Naive thymus-derived CD4-positive, alpha-beta T cell (primary cell): ENCODE measurements at regions of chr10 and their contacts with region 1.

Region 1: DNA sequence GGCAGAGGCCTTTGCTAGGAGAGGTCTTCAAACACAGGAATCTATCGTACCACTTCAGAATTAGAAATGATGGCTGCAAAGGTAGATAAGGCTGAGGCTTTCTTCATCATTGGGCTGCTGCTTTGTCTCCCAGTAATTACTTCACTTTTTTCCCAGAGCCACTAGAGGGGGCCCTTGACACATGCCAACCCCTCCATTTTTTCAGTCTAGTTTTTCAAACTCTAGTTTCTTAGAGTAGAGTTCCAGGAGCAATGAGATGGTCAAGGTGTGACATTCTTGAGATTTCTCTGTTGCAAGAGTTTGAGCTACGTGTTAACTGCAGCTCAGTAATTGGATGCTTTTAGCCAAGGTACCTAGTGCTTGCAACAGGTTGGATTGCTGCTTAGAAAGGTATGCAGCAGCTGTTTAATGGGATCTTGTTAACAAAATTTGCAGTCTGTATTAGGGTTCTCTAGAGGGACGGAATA is 33.8 kb upstream of the RBM20 start:
- DNase-seq: peak; percentile 16 to 75 (median 70)
- ATAC-seq: peak; percentile 84
- H3K4me3 ChIP-seq: no peak overlapping the region
- H3K4me3 Mint-ChIP-seq: no peak overlapping the region
- H3K27ac ChIP-seq: no peak overlapping the region
- H3K27ac Mint-ChIP-seq: no peak overlapping the region
- H3K4me1 ChIP-seq: no peaks in the 10 kb centered on the region
- H3K4me1 Mint-ChIP-seq: peaks cover 0 to 18% (median 7%) of the 10 kb centered on the region in 7 donors
- H3K27me3 ChIP-seq: no peaks in the 10 kb centered on the region
- H3K27me3 Mint-ChIP-seq: no peaks in the 10 kb centered on the region

Region 2: GRCh38 chr10:110118891-110119621 is 491.3 kb before region 1 on chr10:
- CTCF ChIA-PET with region 1: no interaction called
- POLR2A ChIA-PET with region 1: no interaction called
- intact Hi-C with region 1: no loop called
- DNase-seq: no peak
- ATAC-seq: no peak
- H3K4me3 ChIP-seq: no peak overlapping the region
- H3K4me3 Mint-ChIP-seq: no peak overlapping the region
- H3K27ac ChIP-seq: no peak overlapping the region
- H3K27ac Mint-ChIP-seq: peak overlapping the region in 3 of 9 donors; percentile 8 to 54 (median 23)
- H3K4me1 ChIP-seq: no peaks in the 10 kb centered on the region
- H3K4me1 Mint-ChIP-seq: peaks cover 0 to 15% (median 7%) of the 10 kb centered on the region in 7 donors
- H3K27me3 ChIP-seq: no peaks in the 10 kb centered on the region
- H3K27me3 Mint-ChIP-seq: no peaks in the 10 kb centered on the region

Region 3: DNA sequence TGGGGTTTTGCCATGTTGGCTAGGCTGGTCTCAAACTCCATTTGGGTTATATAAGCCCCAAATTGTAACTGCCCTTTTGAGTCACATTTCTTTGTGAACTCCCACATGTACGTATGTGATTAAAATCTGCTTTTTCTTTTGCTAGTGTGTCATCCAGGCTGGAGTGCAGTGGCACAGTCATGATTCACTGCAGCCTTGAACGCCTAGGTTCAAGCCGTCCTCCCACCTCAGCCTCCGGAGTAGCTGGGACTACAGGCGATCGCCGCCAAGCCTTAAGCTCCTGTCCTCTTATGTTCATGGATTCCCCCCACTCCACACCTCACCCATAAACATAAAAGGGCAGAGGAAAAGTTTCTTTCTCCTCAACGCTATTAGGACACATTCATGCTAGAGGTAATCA is 47.2 kb before region 1 on chr10:
- CTCF ChIA-PET with region 1: no interaction called
- POLR2A ChIA-PET with region 1: no interaction called
- intact Hi-C with region 1: no loop called
- DNase-seq: no peak
- ATAC-seq: no peak
- H3K4me3 ChIP-seq: no peak overlapping the region
- H3K4me3 Mint-ChIP-seq: no peak overlapping the region
- H3K27ac ChIP-seq: no peak overlapping the region
- H3K27ac Mint-ChIP-seq: no peak overlapping the region
- H3K4me1 ChIP-seq: peaks cover 0 to 4% of the 10 kb centered on the region in 2 donors
- H3K4me1 Mint-ChIP-seq: peaks cover 0 to 8% (median 6%) of the 10 kb centered on the region in 7 donors
- H3K27me3 ChIP-seq: no peaks in the 10 kb centered on the region
- H3K27me3 Mint-ChIP-seq: peaks cover 6 to 56% (median 17%) of the 10 kb centered on the region in 5 donors

Region 4: GRCh38 chr10:110681023-110681681 is 70.8 kb after region 1 on chr10:
- CTCF ChIA-PET with region 1: interaction called, 3 read pairs
- POLR2A ChIA-PET with region 1: no interaction called
- intact Hi-C with region 1: loop called (anchors 1 kb)
- DNase-seq: peak in 3 of 9 donors; percentile 7 to 27 (median 11)
- ATAC-seq: peak; percentile 51
- H3K4me3 ChIP-seq: no peak overlapping the region
- H3K4me3 Mint-ChIP-seq: no peak overlapping the region
- H3K27ac ChIP-seq: no peak overlapping the region
- H3K27ac Mint-ChIP-seq: peak overlapping the region in 2 of 9 donors; percentile 13 to 38
- H3K4me1 ChIP-seq: no peaks in the 10 kb centered on the region
- H3K4me1 Mint-ChIP-seq: peaks cover 0 to 10% (median 3%) of the 10 kb centered on the region in 7 donors
- H3K27me3 ChIP-seq: no peaks in the 10 kb centered on the region
- H3K27me3 Mint-ChIP-seq: peaks cover 0 to 37% (median 12%) of the 10 kb centered on the region in 5 donors

Region 5: DNA sequence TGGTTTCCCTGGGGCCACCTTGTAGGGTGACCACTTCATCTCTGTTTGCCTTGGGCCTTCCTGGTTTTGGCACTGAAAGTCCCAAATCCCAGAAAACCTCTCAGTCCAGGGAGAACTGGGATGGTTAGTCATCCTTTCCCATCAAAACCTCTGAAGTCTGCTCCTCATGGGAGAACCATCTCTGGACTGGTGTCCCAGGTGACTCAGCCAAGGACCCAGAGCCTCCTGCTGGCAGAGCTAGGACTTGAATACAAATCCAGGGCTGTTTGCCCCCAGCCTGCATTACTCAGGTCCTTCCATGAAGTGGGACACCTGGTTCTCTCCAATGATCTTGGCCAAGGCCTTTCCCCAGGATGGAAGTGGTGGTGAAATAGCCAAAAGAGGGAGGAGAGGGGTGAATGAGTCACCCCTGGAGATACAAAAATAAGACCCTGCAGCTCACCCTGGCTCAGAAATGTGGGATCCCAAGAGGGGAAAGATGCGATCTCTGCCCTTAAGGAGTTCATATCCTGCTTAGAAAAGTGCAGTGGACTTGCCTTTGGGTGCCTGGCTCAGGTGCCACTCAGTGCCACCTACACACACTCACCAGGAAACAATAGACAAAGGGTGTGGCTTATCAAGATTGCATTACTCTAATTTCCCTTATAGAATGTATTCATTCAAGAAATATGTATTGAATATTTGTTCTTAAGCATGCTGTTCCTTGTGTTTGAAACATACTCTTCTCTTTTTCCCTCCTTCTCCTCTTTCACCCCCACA is 488.5 kb after region 1 on chr10:
- CTCF ChIA-PET with region 1: no interaction called
- POLR2A ChIA-PET with region 1: no interaction called
- intact Hi-C with region 1: loop called in 1 of 2 experiments (anchors 1 kb)
- DNase-seq: no peak
- ATAC-seq: no peak
- H3K4me3 ChIP-seq: no peak overlapping the region
- H3K4me3 Mint-ChIP-seq: no peak overlapping the region
- H3K27ac ChIP-seq: no peak overlapping the region
- H3K27ac Mint-ChIP-seq: no peak overlapping the region
- H3K4me1 ChIP-seq: no peaks in the 10 kb centered on the region
- H3K4me1 Mint-ChIP-seq: no peaks in the 10 kb centered on the region
- H3K27me3 ChIP-seq: no peaks in the 10 kb centered on the region
- H3K27me3 Mint-ChIP-seq: peaks cover 0 to 33% (median 10%) of the 10 kb centered on the region in 5 donors

Region 6: GRCh38 chr10:112140110-112140970 is 1530.0 kb after region 1 on chr10:
- CTCF ChIA-PET with region 1: interaction called, 3 read pairs
- POLR2A ChIA-PET with region 1: no interaction called
- intact Hi-C with region 1: loop called in 1 of 2 experiments (anchors 5 kb)
- DNase-seq: peak; percentile 15 to 72 (median 43)
- ATAC-seq: peak; percentile 87
- H3K4me3 ChIP-seq: no peak overlapping the region
- H3K4me3 Mint-ChIP-seq: no peak overlapping the region
- H3K27ac ChIP-seq: no peak overlapping the region
- H3K27ac Mint-ChIP-seq: no peak overlapping the region
- H3K4me1 ChIP-seq: no peaks in the 10 kb centered on the region
- H3K4me1 Mint-ChIP-seq: peaks cover 0 to 4% (median 0%) of the 10 kb centered on the region in 7 donors
- H3K27me3 ChIP-seq: no peaks in the 10 kb centered on the region
- H3K27me3 Mint-ChIP-seq: peaks cover 0 to 9% (median 0%) of the 10 kb centered on the region in 5 donors